KBM-7 (cell line): ENCODE measurements at regions of chr4 and their contacts with region 1.

Region 1: GRCh38 chr4:137414802-137415201 is 117.5 kb downstream of the PCDH18 start:
- DNase-seq: no peak

Region 2: GRCh38 chr4:137474711-137475301 is 60.0 kb after region 1 on chr4:
- in situ Hi-C with region 1: loop called (anchors 5 kb)
- DNase-seq: no peak